T-cell (primary cell): ENCODE measurements at regions of chr12 and their contacts with region 1.

Region 1: GRCh38 chr12:109421355-109422087 is 55.6 kb downstream of the KCTD10 start:
- DNase-seq: no peak
- ATAC-seq: no peak
- H3K4me3 ChIP-seq: no peak overlapping the region
- H3K4me3 Mint-ChIP-seq: no peak overlapping the region
- H3K27ac ChIP-seq: no peak overlapping the region
- H3K27ac Mint-ChIP-seq: no peak overlapping the region
- H3K4me1 ChIP-seq: no peaks in the 10 kb centered on the region
- H3K4me1 Mint-ChIP-seq: no peaks in the 10 kb centered on the region
- H3K27me3 ChIP-seq: peaks cover 0 to 22% of the 10 kb centered on the region in 2 experiments
- H3K27me3 Mint-ChIP-seq: peaks cover 23 to 34% of the 10 kb centered on the region in 2 donors

Region 2: DNA sequence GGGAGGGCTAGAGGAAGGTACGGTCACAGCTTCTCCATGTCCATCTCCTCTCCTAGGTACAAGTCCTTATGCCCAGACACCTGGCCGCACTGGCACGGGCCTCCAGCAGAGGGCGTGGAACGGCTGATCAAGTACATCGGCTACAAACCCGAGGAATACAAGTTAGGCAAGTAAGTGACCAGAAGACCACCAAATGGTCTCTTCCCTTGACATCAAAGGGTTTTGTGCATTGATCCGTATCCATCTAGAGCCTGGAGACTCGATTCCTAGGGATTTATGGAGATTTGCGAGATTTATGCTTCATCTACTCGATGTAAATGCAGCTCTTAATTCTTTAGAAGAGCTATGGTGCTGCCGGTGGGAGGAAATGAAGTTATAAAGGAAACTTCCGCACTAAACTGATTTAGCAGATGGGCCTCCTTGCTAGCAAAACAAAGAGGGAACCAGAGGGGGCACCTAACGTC is 11.4 kb after region 1 on chr12:
- CTCF ChIA-PET with region 1: interaction called, 4 to 11 read pairs
- POLR2A ChIA-PET with region 1: no interaction called
- DNase-seq: peak; percentile 35 to 81 (median 71)
- ATAC-seq: peak; percentile 70 to 81 (median 78)
- H3K4me3 ChIP-seq: no peak overlapping the region
- H3K4me3 Mint-ChIP-seq: peak overlapping the region in 2 of 3 donors; percentile 34 to 53
- H3K27ac ChIP-seq: no peak overlapping the region
- H3K27ac Mint-ChIP-seq: peak overlapping the region; percentile 83 to 92
- H3K4me1 ChIP-seq: peaks cover 0 to 10% of the 10 kb centered on the region in 2 experiments
- H3K4me1 Mint-ChIP-seq: peaks cover 8 to 14% (median 11%) of the 10 kb centered on the region in 3 donors
- H3K27me3 ChIP-seq: peaks cover 0 to 3% of the 10 kb centered on the region in 2 experiments
- H3K27me3 Mint-ChIP-seq: no peaks in the 10 kb centered on the region

Region 3: DNA sequence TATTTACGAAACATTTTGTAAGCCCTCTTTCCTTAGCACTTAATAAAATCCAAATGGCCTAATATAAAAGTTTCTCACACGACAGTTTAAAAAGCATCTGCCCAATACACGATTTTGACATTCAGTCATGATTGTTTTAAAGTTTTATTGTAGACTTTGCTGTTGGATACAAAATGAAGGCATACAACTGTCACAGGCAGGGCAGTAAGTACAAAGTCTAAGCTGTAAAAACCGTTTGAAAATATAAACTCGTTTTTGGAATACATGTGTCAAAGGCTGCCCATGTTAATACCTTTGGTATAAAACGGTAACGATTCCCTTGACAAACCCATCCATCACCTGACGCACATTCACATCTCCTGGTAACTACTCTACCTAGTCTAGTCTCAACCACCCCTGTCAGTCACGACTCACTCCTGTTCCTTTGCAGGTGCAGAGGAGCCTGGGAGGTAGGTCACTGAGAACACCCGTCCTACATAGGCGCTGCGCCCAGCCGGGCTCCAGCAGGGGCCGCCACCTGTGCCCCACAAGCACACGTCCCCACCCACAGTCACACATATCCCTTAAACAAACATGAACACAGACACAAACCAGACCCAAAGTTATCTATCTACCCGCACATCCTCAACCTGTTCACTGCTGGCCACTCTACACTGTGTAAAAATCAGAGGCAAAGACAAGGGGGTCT is 28.5 kb after region 1 on chr12:
- CTCF ChIA-PET with region 1: no interaction called
- POLR2A ChIA-PET with region 1: no interaction called
- DNase-seq: peak in 1 of 35 experiments; percentile 9
- ATAC-seq: no peak
- H3K4me3 ChIP-seq: no peak overlapping the region
- H3K4me3 Mint-ChIP-seq: no peak overlapping the region
- H3K27ac ChIP-seq: no peak overlapping the region
- H3K27ac Mint-ChIP-seq: no peak overlapping the region
- H3K4me1 ChIP-seq: peaks cover 0 to 8% of the 10 kb centered on the region in 2 experiments
- H3K4me1 Mint-ChIP-seq: peaks cover 0 to 3% (median 0%) of the 10 kb centered on the region in 3 donors
- H3K27me3 ChIP-seq: no peaks in the 10 kb centered on the region
- H3K27me3 Mint-ChIP-seq: no peaks in the 10 kb centered on the region